ENCODE measurements at regions of chr18 and their contacts with region 1.

Region 1: DNA sequence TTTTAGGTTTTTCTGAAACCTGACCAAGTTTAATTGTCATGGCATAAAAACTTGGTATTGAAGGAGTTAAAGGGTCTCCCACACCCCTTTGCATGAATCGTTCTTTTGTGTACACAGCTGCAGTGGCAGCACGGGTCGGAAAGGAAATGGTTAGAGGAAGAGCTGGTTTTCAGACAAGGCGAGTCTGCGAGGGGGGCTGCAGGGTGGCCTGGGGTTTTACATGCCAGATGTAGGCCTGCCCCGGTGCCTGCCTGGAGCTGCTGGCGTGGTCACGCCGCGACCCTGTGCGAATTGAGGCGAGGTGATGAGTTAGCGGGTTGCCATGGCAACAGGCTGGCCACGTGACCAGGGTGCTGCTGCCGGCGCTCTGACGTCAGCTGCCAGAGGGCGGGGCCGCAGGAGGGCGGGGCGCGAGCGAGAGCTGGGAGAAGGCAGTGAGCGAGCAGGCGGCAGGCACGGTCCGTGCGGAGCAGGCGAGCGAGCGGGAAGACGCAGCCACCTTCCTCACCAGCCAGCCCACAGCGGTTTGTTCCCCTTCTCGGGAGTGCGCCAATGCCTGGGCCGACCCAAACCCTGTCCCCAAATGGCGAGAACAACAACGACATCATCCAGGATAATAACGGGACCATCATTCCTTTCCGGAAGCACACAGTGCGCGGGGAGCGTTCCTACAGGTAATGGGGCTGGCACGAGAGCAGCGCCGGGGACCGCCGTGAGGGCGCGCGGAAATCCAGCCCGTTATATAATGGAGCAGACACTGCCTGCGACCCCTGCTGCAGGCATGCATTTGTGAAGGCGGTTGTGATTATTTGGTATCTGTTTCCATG is at the start of gene MAPRE2:
- H3K4me3 ChIP-seq: peak within 1 kb of the TSS; percentile 66
- H3K27ac ChIP-seq: peak within 1 kb of the TSS; percentile 48
- H3K4me1 ChIP-seq: 0 out of 2 replicates have a peak, but pooled peaks cover 2% of the 10 kb centered on the region
- CTCF ChIP-seq: peak; percentile 60

Region 2: DNA sequence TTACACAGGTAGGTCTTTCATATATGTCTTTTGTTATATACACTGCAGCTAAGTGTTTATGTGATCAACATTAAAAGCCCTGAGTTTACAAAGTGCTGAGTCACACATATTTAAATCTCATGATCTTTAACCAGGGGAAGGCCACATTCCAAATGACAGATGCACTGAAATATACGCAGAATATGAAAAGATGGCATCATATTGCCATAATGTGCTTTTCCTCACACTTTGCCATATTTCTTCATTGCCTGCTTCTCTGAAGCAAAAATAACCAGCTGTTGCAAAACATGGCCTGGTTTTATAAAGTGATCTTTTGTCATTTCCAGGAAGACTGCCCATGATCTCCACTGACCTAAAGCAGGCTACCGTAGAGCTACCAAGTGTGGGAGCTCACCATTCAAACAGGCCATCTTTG is 93.5 kb before region 1 on chr18:
- CTCF ChIA-PET with region 1: no interaction called
- POLR2A ChIA-PET with region 1: no interaction called
- H3K4me3 ChIP-seq: no peak overlapping the region
- H3K27ac ChIP-seq: no peak overlapping the region
- H3K4me1 ChIP-seq: no peaks in the 10 kb centered on the region
- CTCF ChIP-seq: no peak

Region 3: GRCh38 chr18:35029770-35030169 is 11.4 kb before region 1 on chr18:
- CTCF ChIA-PET with region 1: interaction called, 5 read pairs
- POLR2A ChIA-PET with region 1: interaction called, 11 read pairs
- H3K4me3 ChIP-seq: no peak overlapping the region
- H3K27ac ChIP-seq: no peak overlapping the region
- H3K4me1 ChIP-seq: no peaks in the 10 kb centered on the region
- CTCF ChIP-seq: no peak

Region 4: GRCh38 chr18:35060122-35060815 is 19.1 kb after region 1 on chr18:
- CTCF ChIA-PET with region 1: interaction called, 3 read pairs
- POLR2A ChIA-PET with region 1: interaction called, 12 read pairs
- H3K4me3 ChIP-seq: no peak overlapping the region
- H3K27ac ChIP-seq: no peak overlapping the region
- H3K4me1 ChIP-seq: peaks cover 3% of the 10 kb centered on the region; the same call in 1 of the 2 replicates
- CTCF ChIP-seq: no peak

Region 5: GRCh38 chr18:35073186-35074105 is 32.2 kb after region 1 on chr18:
- CTCF ChIA-PET with region 1: no interaction called
- POLR2A ChIA-PET with region 1: interaction called, 11 read pairs
- H3K4me3 ChIP-seq: no peak overlapping the region
- H3K27ac ChIP-seq: no peak overlapping the region
- H3K4me1 ChIP-seq: no peaks in the 10 kb centered on the region
- CTCF ChIP-seq: no peak

Measured in HEK293 (cell line).